Calu3 (cell line): ENCODE measurements at regions of chr21 and their contacts with region 1.

Region 1: DNA sequence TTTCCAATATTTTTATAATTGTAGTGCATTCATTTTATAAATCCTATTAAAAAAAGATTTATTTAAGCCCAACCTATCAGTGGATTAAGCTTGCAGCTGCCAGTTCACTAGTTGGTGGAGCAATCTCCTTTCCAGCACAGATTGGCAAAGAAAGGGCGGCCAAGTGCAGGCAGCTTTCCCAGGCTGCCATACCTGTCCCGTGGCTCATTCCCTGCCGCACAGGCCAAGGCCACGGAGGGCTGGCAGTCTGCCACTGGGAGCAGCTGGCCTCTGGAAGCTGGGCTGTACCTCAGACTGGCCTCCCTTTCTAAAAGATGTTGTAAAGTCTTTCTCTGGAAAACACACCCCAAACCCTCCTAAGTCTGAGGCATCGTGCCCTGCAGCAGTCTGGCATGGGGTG is 74.2 kb downstream of the SIM2 start:
- DNase-seq: peak; percentile 54
- H3K4me3 Mint-ChIP-seq: no peak overlapping the region
- H3K27ac Mint-ChIP-seq: no peak overlapping the region
- H3K4me1 Mint-ChIP-seq: peaks cover 8% of the 10 kb centered on the region
- H3K27me3 Mint-ChIP-seq: no peaks in the 10 kb centered on the region
- CTCF ChIP-seq: no peak

Region 2: GRCh38 chr21:36576441-36576840 is 196.7 kb before region 1 on chr21:
- CTCF ChIA-PET with region 1: no interaction called
- intact Hi-C with region 1: no loop called
- DNase-seq: no peak
- H3K4me3 Mint-ChIP-seq: no peak overlapping the region
- H3K27ac Mint-ChIP-seq: no peak overlapping the region
- H3K4me1 Mint-ChIP-seq: no peaks in the 10 kb centered on the region
- H3K27me3 Mint-ChIP-seq: peaks cover 35% of the 10 kb centered on the region
- CTCF ChIP-seq: no peak

Region 3: GRCh38 chr21:36806103-36806502 is 33.0 kb after region 1 on chr21:
- CTCF ChIA-PET with region 1: no interaction called
- intact Hi-C with region 1: loop called (anchors 2 kb)
- DNase-seq: no peak
- H3K4me3 Mint-ChIP-seq: no peak overlapping the region
- H3K27ac Mint-ChIP-seq: no peak overlapping the region
- H3K4me1 Mint-ChIP-seq: peaks cover 9% of the 10 kb centered on the region
- H3K27me3 Mint-ChIP-seq: no peaks in the 10 kb centered on the region
- CTCF ChIP-seq: no peak

Region 4: GRCh38 chr21:36847171-36847570 is 74.1 kb after region 1 on chr21:
- CTCF ChIA-PET with region 1: no interaction called
- intact Hi-C with region 1: loop called (anchors 5 kb)
- DNase-seq: no peak
- H3K4me3 Mint-ChIP-seq: no peak overlapping the region
- H3K27ac Mint-ChIP-seq: no peak overlapping the region
- H3K4me1 Mint-ChIP-seq: no peaks in the 10 kb centered on the region
- H3K27me3 Mint-ChIP-seq: no peaks in the 10 kb centered on the region
- CTCF ChIP-seq: no peak